HepG2 (cell line): ENCODE measurements at regions of chrX and their contacts with region 1.

Region 1: GRCh38 chrX:68732906-68733493 is 85.5 kb downstream of the STARD8 start:
- DNase-seq: peak; percentile 19
- ATAC-seq: peak; percentile 86
- H3K4me3 ChIP-seq: no peak overlapping the region
- H3K27ac ChIP-seq: no peak overlapping the region
- H3K4me1 ChIP-seq: no peaks in the 10 kb centered on the region
- H3K27me3 ChIP-seq: no peaks in the 10 kb centered on the region
- CTCF ChIP-seq: peak; percentile 80
- EP300 ChIP-seq: no peak
- POLR2A ChIP-seq: no peak
- RAD21 ChIP-seq: peak; percentile 75

Region 2: GRCh38 chrX:68746988-68747387 is 14.0 kb after region 1 on chrX:
- CTCF ChIA-PET with region 1: no interaction called
- POLR2A ChIA-PET with region 1: no interaction called
- in situ Hi-C with region 1: no loop called
- intact Hi-C with region 1: no loop called
- DNase-seq: no peak
- ATAC-seq: no peak
- H3K4me3 ChIP-seq: no peak overlapping the region
- H3K27ac ChIP-seq: no peak overlapping the region
- H3K4me1 ChIP-seq: peaks cover 12% of the 10 kb centered on the region
- H3K27me3 ChIP-seq: no peaks in the 10 kb centered on the region
- CTCF ChIP-seq: no peak
- EP300 ChIP-seq: no peak
- POLR2A ChIP-seq: no peak
- RAD21 ChIP-seq: no peak

Region 3: GRCh38 chrX:68807818-68808217 is 74.8 kb after region 1 on chrX:
- CTCF ChIA-PET with region 1: interaction called, 25 read pairs
- POLR2A ChIA-PET with region 1: no interaction called
- in situ Hi-C with region 1: loop called (anchors 5 kb)
- intact Hi-C with region 1: loop called (anchors 1 kb)
- DNase-seq: no peak
- ATAC-seq: peak; percentile 66
- H3K4me3 ChIP-seq: no peak overlapping the region
- H3K27ac ChIP-seq: no peak overlapping the region
- H3K4me1 ChIP-seq: no peaks in the 10 kb centered on the region
- H3K27me3 ChIP-seq: no peaks in the 10 kb centered on the region
- CTCF ChIP-seq: peak; percentile 60
- EP300 ChIP-seq: no peak
- POLR2A ChIP-seq: no peak
- RAD21 ChIP-seq: no peak

Region 4: DNA sequence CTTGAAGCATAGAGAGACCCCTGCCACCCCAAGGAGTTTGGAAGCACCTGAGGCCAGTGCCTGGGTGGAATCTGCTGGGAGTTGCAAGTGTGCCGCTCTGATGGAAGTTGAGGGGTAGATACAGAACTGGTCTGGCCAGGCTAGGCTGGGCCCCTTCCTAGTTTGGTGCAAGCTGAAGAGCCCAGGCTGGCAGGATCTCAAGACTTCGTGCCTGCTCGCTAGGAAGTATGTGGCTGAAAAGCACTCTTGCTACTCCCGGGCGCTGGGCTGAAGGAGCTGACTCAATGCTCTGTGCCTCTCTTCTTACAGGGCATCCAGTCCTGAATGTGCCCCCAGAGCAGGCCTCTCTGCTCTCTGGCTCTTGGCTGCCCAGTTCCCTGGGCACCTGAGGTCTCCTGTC is 483.9 kb after region 1 on chrX:
- CTCF ChIA-PET with region 1: interaction called, 3 read pairs
- POLR2A ChIA-PET with region 1: no interaction called
- in situ Hi-C with region 1: no loop called
- intact Hi-C with region 1: loop called (anchors 10 kb)
- DNase-seq: no peak
- ATAC-seq: no peak
- H3K4me3 ChIP-seq: no peak overlapping the region
- H3K27ac ChIP-seq: no peak overlapping the region
- H3K4me1 ChIP-seq: no peaks in the 10 kb centered on the region
- H3K27me3 ChIP-seq: no peaks in the 10 kb centered on the region
- CTCF ChIP-seq: no peak
- EP300 ChIP-seq: no peak
- POLR2A ChIP-seq: no peak
- RAD21 ChIP-seq: no peak

Region 5: DNA sequence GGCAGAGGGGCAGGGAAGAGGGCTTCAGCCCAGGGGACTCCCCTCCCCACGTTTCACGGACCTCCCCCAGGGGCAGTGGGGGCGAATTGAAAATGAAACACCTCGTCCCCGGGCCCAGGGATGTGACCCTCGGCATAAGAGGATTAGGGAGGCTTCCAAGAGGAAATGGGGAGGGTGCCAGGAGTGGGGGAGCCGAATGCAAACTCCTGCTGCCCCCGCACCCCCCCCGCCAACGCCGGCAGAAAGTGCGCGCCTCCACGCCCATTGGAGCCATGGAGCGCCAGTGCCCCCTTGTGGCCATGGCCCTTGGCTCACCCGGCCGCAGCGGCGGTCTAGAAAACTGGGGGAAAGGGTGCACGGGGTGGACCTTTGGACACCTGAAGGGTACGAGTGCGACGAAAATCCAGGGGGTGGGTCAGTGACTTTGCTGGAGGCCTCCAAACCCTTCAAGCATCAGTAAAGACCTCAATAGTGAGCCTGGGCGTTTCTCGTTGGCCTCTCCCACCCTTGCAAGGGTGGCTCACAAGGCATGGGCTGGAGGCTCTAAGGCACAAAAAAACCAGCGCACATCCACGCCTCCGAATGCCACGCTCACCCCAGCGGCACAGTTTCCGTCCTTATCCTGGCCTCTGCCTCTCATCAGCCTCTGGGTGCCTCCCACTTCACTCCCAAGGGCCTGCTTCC is 553.0 kb after region 1 on chrX:
- CTCF ChIA-PET with region 1: no interaction called
- POLR2A ChIA-PET with region 1: no interaction called
- in situ Hi-C with region 1: no loop called
- intact Hi-C with region 1: loop called (anchors 5 kb)
- DNase-seq: no peak
- ATAC-seq: peak; percentile 86
- H3K4me3 ChIP-seq: peak overlapping the region in 1 of 3 experiments; percentile 33; a peak in 1 of 6 replicates
- H3K27ac ChIP-seq: no peak overlapping the region
- H3K4me1 ChIP-seq: peaks cover 26% of the 10 kb centered on the region
- H3K27me3 ChIP-seq: no peaks in the 10 kb centered on the region
- CTCF ChIP-seq: peak; percentile 88
- EP300 ChIP-seq: no peak
- POLR2A ChIP-seq: no peak
- RAD21 ChIP-seq: peak; percentile 69